ENCODE measurements at regions of chr5 and their contacts with region 1.

Region 1: DNA sequence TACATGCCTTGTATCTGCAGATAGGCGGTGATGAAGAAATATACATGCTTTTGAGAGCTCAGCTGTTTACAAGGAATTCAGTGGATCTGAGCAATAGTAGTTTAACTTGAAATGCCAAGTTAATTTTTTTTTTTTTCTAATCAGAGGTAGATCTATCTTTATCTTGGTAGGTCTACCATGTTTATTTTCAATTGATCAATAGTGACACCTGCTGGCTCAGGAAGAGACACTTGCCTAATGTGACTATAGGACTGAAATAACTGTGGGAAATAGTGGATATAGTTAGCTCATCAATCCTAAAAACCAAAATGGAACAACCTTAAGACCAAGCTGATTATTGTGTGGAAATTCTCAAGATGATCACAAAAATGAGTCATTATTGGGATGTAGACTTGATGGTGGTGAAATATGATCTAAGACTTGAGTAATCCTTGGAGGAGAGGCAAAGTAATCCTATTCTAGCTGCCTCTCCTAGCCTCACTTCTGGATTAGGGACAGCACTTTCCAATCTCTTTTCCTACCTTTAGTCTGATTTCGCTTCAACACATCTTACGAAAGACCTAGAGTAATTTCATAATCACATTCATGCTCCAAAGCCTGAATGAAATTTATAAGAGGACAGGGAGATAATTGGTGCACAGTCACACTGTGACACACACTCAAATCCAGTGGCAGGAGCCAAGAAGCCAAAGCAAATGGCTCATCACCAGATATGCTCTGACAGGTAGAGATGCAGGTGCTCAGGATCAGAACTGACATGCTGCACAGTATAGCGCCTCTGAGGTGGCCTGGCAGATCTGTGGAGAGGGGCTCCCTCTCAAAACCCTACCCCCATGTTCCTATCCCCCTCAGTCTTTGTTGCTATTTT is 156.3 kb downstream of the HMHB1 start:
- DNase-seq: peak; percentile 32
- CTCF ChIP-seq: peak; percentile 32

Region 2: GRCh38 chr5:142922223-142922952 is 1045.9 kb before region 1 on chr5:
- in situ Hi-C with region 1: loop called (anchors 25 kb)
- DNase-seq: peak; percentile 62
- CTCF ChIP-seq: peak; percentile 47

Region 3: GRCh38 chr5:143222287-143223231 is 745.7 kb before region 1 on chr5:
- in situ Hi-C with region 1: loop called (anchors 25 kb)
- DNase-seq: peak; percentile 62
- CTCF ChIP-seq: no peak

Region 4: DNA sequence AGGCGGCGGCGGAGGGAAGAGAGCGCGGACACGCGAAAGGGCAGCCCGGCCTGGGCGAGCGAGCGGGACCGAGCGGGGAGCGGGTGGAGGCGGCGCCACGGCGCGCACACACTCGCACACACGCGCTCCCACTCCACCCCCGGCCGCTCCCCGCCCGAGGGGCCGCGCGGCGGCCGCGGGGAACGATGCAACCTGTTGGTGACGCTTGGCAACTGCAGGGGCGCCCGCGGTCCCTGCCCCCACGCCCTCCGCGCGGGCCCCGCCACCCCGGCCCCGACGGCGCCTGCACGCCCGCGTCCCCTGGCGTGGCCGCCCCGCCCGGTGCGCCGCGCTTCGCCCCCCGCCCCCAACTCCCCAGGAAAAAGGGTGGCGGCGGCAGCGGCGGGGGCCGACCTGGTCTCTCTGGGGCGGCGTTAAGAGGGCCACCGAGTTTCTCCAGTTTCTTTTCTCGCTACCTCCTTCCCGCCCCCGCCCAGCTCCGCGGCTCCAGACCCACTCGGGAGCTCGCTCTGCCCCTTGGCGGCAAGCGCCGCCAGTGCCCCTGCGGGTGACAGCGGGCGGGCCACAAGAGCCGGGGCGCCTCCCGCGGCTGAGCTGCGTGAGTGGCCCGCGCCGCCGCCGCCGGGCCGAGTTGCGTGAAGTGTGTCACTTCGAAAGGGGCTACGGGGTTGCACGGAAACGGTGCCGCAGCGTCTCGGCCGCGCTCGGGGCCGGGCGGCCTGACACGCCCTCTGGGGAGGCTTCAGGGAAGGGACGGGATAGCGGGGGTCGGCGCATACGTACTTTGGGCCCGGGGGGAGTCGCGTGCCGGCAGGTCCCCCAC is 564.4 kb before region 1 on chr5 and contains the start of gene NR3C1:
- in situ Hi-C with region 1: loop called (anchors 25 kb)
- DNase-seq: peak; percentile 82
- CTCF ChIP-seq: peak; percentile 64

Region 5: DNA sequence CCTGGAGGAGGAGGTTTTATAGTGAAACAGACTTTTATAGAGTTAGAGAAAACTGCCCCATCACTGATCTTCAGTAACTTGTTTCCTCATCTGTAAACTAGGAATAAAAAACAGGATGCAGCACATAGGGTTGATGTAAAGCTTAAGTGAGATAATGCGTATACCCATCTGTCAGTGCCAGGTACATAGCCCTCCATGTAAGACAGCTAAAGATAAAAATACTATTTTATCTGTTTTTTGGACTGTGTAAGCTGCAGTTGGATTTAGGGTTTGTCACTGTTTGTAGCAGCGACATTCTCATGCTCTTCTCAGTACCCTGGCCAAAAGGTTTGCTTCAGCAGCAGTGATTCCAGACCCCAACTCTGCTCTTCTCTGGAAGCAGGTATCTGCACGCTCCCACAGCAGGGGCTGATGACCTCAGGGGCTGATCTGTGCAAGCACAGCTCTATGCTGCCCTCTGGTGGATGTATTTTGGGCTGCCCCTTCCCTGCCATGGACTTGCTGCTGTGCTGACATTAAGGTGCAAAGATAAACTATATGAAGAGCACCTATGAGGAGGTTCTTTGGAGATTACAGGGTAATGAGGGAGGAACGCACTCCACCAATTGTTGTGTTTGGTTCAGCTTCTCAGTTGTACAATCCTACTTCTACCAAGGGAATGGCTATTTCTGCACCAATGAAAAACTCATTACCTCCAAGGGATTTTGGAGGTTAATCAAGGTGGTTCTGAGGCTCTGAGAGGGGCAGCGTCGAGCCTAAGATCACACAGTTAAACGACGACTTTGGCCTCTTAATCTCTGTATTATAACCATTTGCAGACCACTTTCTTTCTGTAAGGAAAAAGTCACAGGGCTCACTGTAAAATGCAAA is 143.2 kb before region 1 on chr5:
- in situ Hi-C with region 1: no loop called
- DNase-seq: peak; percentile 64
- CTCF ChIP-seq: peak; percentile 87

Region 6: GRCh38 chr5:144072518-144072927 is 104.3 kb after region 1 on chr5:
- in situ Hi-C with region 1: no loop called
- DNase-seq: no peak
- CTCF ChIP-seq: no peak

Measured in GM13976 (cell line).